ENCODE measurements at regions of chr3 and their contacts with region 1.

Region 1: GRCh38 chr3:150286390-150287147 is 121.5 kb upstream of the TSC22D2 start:
- DNase-seq: peak in 4 of 9 experiments; percentile 8 to 68 (median 34)
- ATAC-seq: peak; percentile 83
- H3K4me3 ChIP-seq: no peak overlapping the region
- H3K4me3 Mint-ChIP-seq: no peak overlapping the region
- H3K27ac ChIP-seq: no peak overlapping the region
- H3K27ac Mint-ChIP-seq: no peak overlapping the region
- H3K4me1 ChIP-seq: no peaks in the 10 kb centered on the region
- H3K4me1 Mint-ChIP-seq: no peaks in the 10 kb centered on the region
- H3K27me3 ChIP-seq: peaks cover 2% of the 10 kb centered on the region in 2 experiments
- H3K27me3 Mint-ChIP-seq: peaks cover 13% of the 10 kb centered on the region
- CTCF ChIP-seq: peak; percentile 65

Region 2: GRCh38 chr3:150421799-150422548 is 135.4 kb after region 1 on chr3:
- CTCF ChIA-PET with region 1: no interaction called
- POLR2A ChIA-PET with region 1: no interaction called
- intact Hi-C with region 1: loop called in 1 of 2 experiments (anchors 5 kb)
- DNase-seq: peak in 1 of 9 experiments; percentile 13
- ATAC-seq: peak; percentile 36
- H3K4me3 ChIP-seq: no peak overlapping the region
- H3K4me3 Mint-ChIP-seq: no peak overlapping the region
- H3K27ac ChIP-seq: no peak overlapping the region
- H3K27ac Mint-ChIP-seq: no peak overlapping the region
- H3K4me1 ChIP-seq: peaks cover 18% of the 10 kb centered on the region
- H3K4me1 Mint-ChIP-seq: peaks cover 66% of the 10 kb centered on the region
- H3K27me3 ChIP-seq: no peaks in the 10 kb centered on the region
- H3K27me3 Mint-ChIP-seq: no peaks in the 10 kb centered on the region
- CTCF ChIP-seq: no peak

Region 3: DNA sequence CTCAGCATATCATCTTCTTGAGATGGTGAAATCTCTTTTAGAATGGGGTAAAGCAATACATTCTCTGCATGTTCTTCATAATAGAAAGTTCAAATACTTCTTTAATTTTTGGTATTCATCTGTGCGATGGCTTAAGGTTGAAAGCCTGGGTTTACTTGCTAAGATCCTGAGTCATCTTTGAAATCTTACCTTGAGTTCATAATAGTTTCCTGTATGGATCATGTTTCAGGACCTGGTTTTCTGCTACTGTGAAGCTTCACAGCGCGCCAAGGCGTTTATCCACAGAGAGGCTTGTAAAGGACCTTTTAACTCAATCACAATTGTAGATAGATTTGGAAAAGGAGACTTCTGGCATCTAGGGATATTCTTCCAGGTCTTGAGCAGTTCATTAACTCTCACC is 837.9 kb after region 1 on chr3:
- CTCF ChIA-PET with region 1: no interaction called
- POLR2A ChIA-PET with region 1: no interaction called
- intact Hi-C with region 1: no loop called
- DNase-seq: no peak
- ATAC-seq: no peak
- H3K4me3 ChIP-seq: no peak overlapping the region
- H3K4me3 Mint-ChIP-seq: no peak overlapping the region
- H3K27ac ChIP-seq: no peak overlapping the region
- H3K27ac Mint-ChIP-seq: no peak overlapping the region
- H3K4me1 ChIP-seq: no peaks in the 10 kb centered on the region
- H3K4me1 Mint-ChIP-seq: no peaks in the 10 kb centered on the region
- H3K27me3 ChIP-seq: no peaks in the 10 kb centered on the region
- H3K27me3 Mint-ChIP-seq: no peaks in the 10 kb centered on the region
- CTCF ChIP-seq: no peak